ENCODE measurements at regions of chr9 and their contacts with region 1.

Region 1: GRCh38 chr9:33466565-33467495 is 6.9 kb downstream of the NOL6 start:
- DNase-seq: peak; percentile 60
- H3K4me3 Mint-ChIP-seq: no peak overlapping the region
- H3K27ac Mint-ChIP-seq: no peak overlapping the region
- H3K4me1 Mint-ChIP-seq: peaks cover 8% of the 10 kb centered on the region
- H3K27me3 Mint-ChIP-seq: no peaks in the 10 kb centered on the region

Region 2: DNA sequence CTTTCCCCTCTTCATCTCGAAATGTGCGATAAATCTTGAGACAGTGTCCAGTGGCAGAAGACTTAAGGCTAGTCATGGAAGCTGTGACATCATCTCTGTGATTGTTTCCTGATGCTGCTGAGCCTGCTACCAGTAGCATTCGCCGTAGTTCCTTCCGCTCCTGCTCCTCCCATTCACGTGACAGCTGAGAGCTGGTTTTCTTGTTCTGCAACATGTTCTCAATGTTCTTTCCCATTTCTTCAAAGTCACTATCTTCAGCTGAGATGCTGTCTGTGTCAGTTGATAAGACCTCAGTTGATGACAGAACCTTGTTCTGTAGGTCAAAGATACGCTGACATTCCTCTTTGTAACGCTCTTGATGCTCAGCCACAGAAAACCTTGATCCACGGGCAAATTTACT is 834.8 kb before region 1 on chr9:
- intact Hi-C with region 1: no loop called
- DNase-seq: no peak
- H3K4me3 Mint-ChIP-seq: no peak overlapping the region
- H3K27ac Mint-ChIP-seq: no peak overlapping the region
- H3K4me1 Mint-ChIP-seq: no peaks in the 10 kb centered on the region
- H3K27me3 Mint-ChIP-seq: no peaks in the 10 kb centered on the region

Region 3: GRCh38 chr9:33374634-33375213 is 92.1 kb before region 1 on chr9:
- intact Hi-C with region 1: loop called (anchors 2 kb)
- DNase-seq: peak; percentile 57
- H3K4me3 Mint-ChIP-seq: no peak overlapping the region
- H3K27ac Mint-ChIP-seq: peak overlapping the region; percentile 39
- H3K4me1 Mint-ChIP-seq: peaks cover 10% of the 10 kb centered on the region
- H3K27me3 Mint-ChIP-seq: no peaks in the 10 kb centered on the region

Region 4: DNA sequence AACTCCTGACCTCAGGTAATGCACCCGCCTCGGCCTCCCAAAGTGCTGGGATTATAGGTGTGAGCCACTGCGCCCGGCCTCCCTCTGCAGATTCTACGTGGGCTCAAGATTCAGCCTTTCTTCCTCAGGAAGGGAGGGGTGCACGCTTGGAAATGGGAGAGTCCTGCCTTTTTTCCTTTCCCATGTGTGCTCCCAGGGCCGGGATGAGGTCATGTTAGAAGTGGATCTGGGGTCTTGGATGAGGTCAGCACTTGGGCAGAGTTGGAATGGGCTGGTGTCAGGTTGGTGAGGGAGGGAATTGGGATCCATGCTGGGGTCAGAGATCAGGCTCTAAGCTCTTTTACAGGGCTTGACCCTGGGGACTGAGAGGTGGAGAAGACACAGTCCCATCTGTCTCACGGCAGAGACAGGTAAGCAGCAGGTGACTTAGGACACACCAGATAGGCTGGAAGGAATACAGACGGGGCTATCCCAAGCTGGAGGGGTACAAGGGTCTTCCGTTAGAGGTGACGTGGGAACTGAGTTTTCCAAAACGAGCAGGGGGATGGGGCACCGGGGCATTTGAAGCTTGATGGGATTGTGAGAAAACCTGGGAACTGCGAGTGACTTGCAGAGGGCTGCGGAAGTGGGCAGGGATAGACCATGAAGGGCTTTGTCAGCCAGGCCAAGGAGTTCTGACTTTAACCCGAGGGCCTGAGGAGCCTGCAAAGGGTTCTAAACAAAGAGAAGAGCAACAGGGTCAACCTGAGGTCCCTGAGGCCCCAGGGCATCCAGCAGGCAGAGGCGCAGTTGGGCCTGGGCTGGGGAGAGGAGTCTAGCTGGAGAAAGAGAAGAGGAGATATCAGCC is 62.7 kb before region 1 on chr9:
- intact Hi-C with region 1: loop called (anchors 1 kb)
- DNase-seq: no peak
- H3K4me3 Mint-ChIP-seq: no peak overlapping the region
- H3K27ac Mint-ChIP-seq: no peak overlapping the region
- H3K4me1 Mint-ChIP-seq: no peaks in the 10 kb centered on the region
- H3K27me3 Mint-ChIP-seq: peaks cover 6% of the 10 kb centered on the region

Region 5: DNA sequence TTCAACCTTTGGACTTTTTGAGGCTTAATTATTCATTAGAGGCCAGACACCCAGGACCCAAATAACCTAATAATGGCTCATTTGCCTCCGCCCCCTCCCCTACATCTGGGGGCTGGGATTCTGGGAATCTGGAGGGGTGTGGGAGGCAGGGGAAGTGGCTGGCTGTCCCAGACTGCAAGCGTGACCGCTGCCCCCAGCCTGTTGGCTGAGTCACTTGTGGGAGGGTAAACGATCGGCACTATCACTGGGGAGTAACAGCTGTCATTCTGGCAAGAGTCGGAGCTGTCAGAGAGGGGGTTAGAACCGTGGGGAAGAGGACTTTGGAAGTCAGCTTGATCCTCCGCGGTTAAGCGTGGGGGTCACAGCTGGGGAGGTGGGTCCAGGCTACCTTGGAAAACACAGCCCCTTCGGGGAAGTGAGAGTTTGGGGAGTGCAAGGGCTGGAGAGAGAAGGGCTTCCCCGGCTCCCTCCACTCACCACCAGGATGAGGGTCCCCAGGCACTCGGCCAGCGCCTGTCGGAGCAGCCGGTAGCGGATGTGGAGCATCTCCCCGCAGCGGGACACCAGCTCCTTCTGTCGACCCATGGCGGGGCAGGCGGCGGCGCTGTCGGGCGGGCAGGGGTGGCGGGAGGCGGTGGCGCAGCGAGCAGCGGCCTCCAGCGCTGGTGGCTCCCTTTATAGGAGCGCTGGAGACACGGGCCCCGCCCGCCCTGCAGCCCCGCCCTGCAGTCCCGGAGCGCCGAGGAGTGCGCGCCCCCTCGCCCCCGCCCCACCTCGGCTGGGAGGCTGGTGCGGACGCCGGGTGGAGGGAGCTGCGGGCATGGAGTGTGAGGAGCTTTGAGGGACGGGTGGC is 19.7 kb before region 1 on chr9 and contains the start of gene AQP3:
- intact Hi-C with region 1: no loop called
- DNase-seq: peak; percentile 75
- H3K4me3 Mint-ChIP-seq: peak within 1 kb of the TSS; percentile 81
- H3K27ac Mint-ChIP-seq: peak within 1 kb of the TSS; percentile 79
- H3K4me1 Mint-ChIP-seq: peaks cover 26% of the 10 kb centered on the region
- H3K27me3 Mint-ChIP-seq: no peaks in the 10 kb centered on the region
- total RNA-seq, gene AQP3: 2.1 TPM in 2 replicates

Region 6: DNA sequence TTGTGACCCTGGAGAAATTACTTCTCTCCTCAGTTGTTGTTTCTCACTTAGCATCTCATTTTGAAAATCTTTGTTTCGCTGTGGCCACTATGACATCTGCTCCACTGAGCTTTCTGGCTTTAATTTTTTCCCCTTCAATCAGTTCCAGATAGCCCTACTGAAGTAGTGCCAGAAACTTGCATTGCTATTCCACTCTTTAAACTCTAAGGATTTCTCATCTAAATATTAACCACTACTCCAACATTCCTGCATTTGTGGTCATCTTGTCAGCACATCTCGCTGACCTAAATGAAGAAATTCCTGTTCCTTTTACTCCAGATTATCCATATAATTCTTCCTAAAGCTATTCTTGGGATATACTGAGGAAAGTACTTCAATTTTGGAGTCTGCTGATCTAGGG is 22.2 kb after region 1 on chr9:
- intact Hi-C with region 1: no loop called
- DNase-seq: no peak
- H3K4me3 Mint-ChIP-seq: no peak overlapping the region
- H3K27ac Mint-ChIP-seq: no peak overlapping the region
- H3K4me1 Mint-ChIP-seq: no peaks in the 10 kb centered on the region
- H3K27me3 Mint-ChIP-seq: peaks cover 12% of the 10 kb centered on the region